ENCODE measurements at regions of chr11 and their contacts with region 1.

Region 1: GRCh38 chr11:47248664-47249377 is at the start of gene ACP2:
- DNase-seq: peak; percentile 96
- H3K4me3 ChIP-seq: peak within 1 kb of the TSS; percentile 89
- H3K27ac ChIP-seq: peak within 1 kb of the TSS; percentile 60
- H3K4me1 ChIP-seq: peaks cover 13% of the 10 kb centered on the region
- CTCF ChIP-seq: peak; percentile 70
- total RNA-seq, gene ACP2: 24.5 TPM in 2 replicates

Region 2: DNA sequence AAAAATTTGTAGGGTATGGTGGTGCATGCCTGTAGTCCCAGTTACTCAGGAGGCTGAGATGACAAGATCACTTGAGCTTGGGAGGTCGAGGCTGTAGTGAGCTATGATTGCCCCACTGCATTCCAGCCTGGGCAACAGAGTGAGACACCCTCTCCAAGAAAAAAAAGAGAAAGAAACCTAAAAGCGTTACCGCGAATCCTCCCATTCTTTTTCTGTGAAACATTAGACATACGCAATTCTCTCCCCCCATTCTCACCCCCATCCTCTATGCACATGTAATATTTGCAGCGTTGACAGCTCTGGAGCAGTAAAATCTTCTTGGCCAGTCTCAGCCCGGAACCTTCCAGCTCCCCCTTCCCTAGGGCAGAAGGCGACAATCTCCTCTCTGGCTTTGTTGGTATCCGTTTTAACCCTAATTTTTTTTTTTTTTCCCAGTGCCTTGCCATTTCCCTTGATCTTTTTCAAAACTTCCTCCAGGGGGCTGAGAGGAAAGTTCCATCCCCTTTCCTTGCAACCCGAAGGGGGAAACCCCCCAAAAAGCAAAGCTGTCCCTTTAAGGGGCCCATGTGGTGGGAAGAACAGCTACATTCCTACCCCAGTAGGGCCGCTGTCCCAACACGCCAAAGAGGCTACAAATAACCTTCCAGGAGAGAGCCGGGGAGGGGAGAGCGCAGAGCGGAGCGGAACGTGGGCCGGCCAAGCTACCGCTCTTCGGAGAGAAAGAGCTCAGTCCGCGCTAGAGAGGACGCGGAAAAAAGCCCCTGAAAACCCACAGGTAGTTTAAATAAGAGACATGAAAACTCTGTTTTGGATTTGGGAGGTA is 332.3 kb before region 1 on chr11:
- CTCF ChIA-PET with region 1: no interaction called
- POLR2A ChIA-PET with region 1: no interaction called
- intact Hi-C with region 1: no loop called
- DNase-seq: no peak
- H3K4me3 ChIP-seq: peak overlapping the region; percentile 74
- H3K27ac ChIP-seq: no peak overlapping the region
- H3K4me1 ChIP-seq: peaks cover 66% of the 10 kb centered on the region
- CTCF ChIP-seq: peak; percentile 25; the same call in 1 of the 2 replicates

Region 3: GRCh38 chr11:47213985-47214564 is 34.7 kb before region 1 on chr11:
- CTCF ChIA-PET with region 1: interaction called, 10 read pairs
- POLR2A ChIA-PET with region 1: interaction called, 25 read pairs
- intact Hi-C with region 1: loop called (anchors 1 kb)
- DNase-seq: peak; percentile 37
- H3K4me3 ChIP-seq: peak overlapping the region; percentile 69
- H3K27ac ChIP-seq: no peak overlapping the region
- H3K4me1 ChIP-seq: peaks cover 50% of the 10 kb centered on the region
- CTCF ChIP-seq: no peak

Region 4: GRCh38 chr11:47220401-47220824 is 28.4 kb before region 1 on chr11:
- CTCF ChIA-PET with region 1: interaction called, 10 read pairs
- POLR2A ChIA-PET with region 1: interaction called, 25 read pairs
- intact Hi-C with region 1: loop called (anchors 1 kb)
- DNase-seq: no peak
- H3K4me3 ChIP-seq: no peak overlapping the region
- H3K27ac ChIP-seq: peak overlapping the region; percentile 5
- H3K4me1 ChIP-seq: peaks cover 55% of the 10 kb centered on the region
- CTCF ChIP-seq: no peak

Region 5: DNA sequence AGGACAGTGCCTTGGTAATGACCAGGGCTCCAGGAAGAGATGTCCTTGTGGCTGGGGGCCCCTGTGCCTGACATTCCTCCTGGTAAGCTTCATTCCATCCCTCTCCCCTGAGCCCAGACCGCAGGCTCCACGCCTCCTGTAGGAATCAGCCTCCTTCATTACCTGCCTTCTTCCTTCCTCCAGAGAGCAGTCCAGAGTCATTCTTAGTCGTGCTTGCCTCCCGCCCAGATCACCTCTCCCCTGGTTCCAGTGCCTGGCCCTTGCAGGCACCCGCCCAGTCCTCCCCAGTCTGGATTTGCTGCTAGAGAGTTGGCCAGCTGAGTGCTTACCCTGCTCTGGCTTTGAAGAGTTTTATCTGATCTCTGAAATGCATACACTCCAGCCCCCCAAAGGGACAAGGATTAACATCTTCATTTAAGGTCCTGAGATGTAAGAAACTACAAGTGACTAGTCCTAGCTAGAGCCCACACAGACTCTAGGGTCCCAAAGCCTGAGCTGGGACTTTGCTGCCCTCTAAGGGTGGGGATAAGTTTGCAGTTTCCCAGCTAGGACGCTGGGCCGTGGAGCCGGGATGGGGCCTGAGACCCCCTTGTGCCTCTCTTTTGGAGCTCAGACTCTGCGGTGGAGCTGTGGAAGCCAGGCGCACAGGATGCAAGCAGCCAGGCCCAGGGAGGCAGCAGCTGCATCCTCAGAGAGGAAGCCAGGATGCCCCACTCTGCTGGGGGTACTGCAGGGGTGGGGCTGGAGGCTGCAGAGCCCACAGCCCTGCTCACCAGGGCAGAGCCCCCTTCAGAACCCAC is 10.6 kb after region 1 on chr11:
- CTCF ChIA-PET with region 1: interaction called, 5 read pairs
- POLR2A ChIA-PET with region 1: interaction called, 13 read pairs
- intact Hi-C with region 1: no loop called
- DNase-seq: peak; percentile 72
- H3K4me3 ChIP-seq: no peak overlapping the region
- H3K27ac ChIP-seq: no peak overlapping the region
- H3K4me1 ChIP-seq: peaks cover 4% of the 10 kb centered on the region
- CTCF ChIP-seq: peak; percentile 91

Region 6: GRCh38 chr11:47355283-47356128 is 106.7 kb after region 1 on chr11:
- CTCF ChIA-PET with region 1: no interaction called
- POLR2A ChIA-PET with region 1: no interaction called
- intact Hi-C with region 1: no loop called
- DNase-seq: no peak
- H3K4me3 ChIP-seq: no peak overlapping the region
- H3K27ac ChIP-seq: no peak overlapping the region
- H3K4me1 ChIP-seq: no peaks in the 10 kb centered on the region
- CTCF ChIP-seq: peak; percentile 46

Measured in OCI-LY7 (cell line).